Naive thymus-derived CD4-positive, alpha-beta T cell (primary cell): ENCODE measurements at regions of chr1 and their contacts with region 1.

Region 1: GRCh38 chr1:165871311-165872067 is 44.1 kb downstream of the UCK2 start:
- DNase-seq: peak in 8 of 9 donors; percentile 10 to 57 (median 52)
- ATAC-seq: peak; percentile 89
- H3K4me3 ChIP-seq: peak overlapping the region; percentile 26
- H3K4me3 Mint-ChIP-seq: peak overlapping the region; percentile 54 to 86 (median 64)
- H3K27ac ChIP-seq: no peak overlapping the region
- H3K27ac Mint-ChIP-seq: peak overlapping the region in 8 of 9 donors; percentile 11 to 83 (median 31)
- H3K4me1 ChIP-seq: peaks cover 18 to 28% of the 10 kb centered on the region in 2 donors
- H3K4me1 Mint-ChIP-seq: peaks cover 23 to 60% (median 54%) of the 10 kb centered on the region in 7 donors
- H3K27me3 ChIP-seq: no peaks in the 10 kb centered on the region
- H3K27me3 Mint-ChIP-seq: peaks cover 0 to 11% (median 0%) of the 10 kb centered on the region in 5 donors

Region 2: GRCh38 chr1:165696625-165697100 is 174.8 kb before region 1 on chr1:
- CTCF ChIA-PET with region 1: no interaction called
- POLR2A ChIA-PET with region 1: no interaction called
- intact Hi-C with region 1: no loop called
- DNase-seq: no peak
- ATAC-seq: no peak
- H3K4me3 ChIP-seq: peak overlapping the region; percentile 96
- H3K4me3 Mint-ChIP-seq: peak overlapping the region; percentile 68 to 100 (median 99)
- H3K27ac ChIP-seq: peak overlapping the region; percentile 9
- H3K27ac Mint-ChIP-seq: peak overlapping the region; percentile 1 to 99 (median 79)
- H3K4me1 ChIP-seq: peaks cover 14 to 18% of the 10 kb centered on the region in 2 donors
- H3K4me1 Mint-ChIP-seq: peaks cover 21 to 49% (median 43%) of the 10 kb centered on the region in 7 donors
- H3K27me3 ChIP-seq: no peaks in the 10 kb centered on the region
- H3K27me3 Mint-ChIP-seq: no peaks in the 10 kb centered on the region

Region 3: GRCh38 chr1:165738794-165739193 is 132.7 kb before region 1 on chr1:
- CTCF ChIA-PET with region 1: no interaction called
- POLR2A ChIA-PET with region 1: no interaction called
- intact Hi-C with region 1: loop called in 1 of 2 experiments (anchors 10 kb)
- DNase-seq: no peak
- ATAC-seq: no peak
- H3K4me3 ChIP-seq: no peak overlapping the region
- H3K4me3 Mint-ChIP-seq: no peak overlapping the region
- H3K27ac ChIP-seq: no peak overlapping the region
- H3K27ac Mint-ChIP-seq: peak overlapping the region in 1 of 9 donors; percentile 47
- H3K4me1 ChIP-seq: no peaks in the 10 kb centered on the region
- H3K4me1 Mint-ChIP-seq: peaks cover 2 to 25% (median 13%) of the 10 kb centered on the region in 7 donors
- H3K27me3 ChIP-seq: no peaks in the 10 kb centered on the region
- H3K27me3 Mint-ChIP-seq: no peaks in the 10 kb centered on the region

Region 4: DNA sequence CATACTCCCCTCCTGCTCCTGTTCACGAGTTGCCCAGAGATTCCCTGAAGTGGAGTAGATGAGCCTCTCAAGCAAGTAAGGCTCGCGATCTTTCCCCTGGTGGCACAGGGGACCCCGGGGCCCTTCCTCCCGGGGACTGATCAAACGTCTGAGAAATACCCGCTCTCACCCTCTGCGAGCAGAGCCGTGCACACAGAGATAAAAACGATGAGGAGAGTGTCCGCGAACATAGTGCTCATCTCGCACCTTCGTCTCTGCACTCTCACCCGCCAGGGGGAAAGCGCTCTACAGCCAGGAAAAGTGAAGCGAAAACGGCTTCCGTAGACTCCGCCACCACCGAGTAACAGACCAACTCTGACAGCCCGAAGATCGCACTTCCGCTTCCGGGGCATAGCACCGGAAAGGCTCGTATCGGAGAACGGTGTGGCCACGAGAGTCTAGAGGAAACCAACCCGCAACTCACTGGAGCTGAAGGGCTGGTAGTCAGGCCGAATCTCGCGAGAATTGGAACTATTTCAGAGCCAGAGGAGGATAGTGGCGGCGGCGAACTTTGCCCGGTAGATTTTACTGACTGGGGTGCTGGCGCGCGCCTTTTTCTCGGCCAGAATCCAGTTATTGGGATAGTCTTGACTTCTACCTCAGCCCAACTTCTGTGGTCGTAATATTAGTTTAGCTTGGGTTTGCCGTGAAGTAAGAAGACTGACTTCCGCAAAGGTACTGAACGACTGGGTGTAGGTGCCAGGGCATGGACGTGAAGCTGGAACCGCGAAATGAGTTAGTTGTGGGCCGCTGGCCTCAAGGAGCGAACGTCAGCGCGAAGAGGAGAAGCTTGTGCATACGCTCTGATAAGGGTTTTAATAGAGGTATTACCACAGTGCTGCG is 102.7 kb before region 1 on chr1 and contains the start of gene TMCO1:
- CTCF ChIA-PET with region 1: interaction called, 4 read pairs
- POLR2A ChIA-PET with region 1: interaction called, 6 read pairs
- intact Hi-C with region 1: loop called in 1 of 2 experiments (anchors 2 kb)
- DNase-seq: peak; percentile 76 to 97 (median 94)
- ATAC-seq: peak; percentile 98
- H3K4me3 ChIP-seq: peak within 1 kb of the TSS; percentile 94
- H3K4me3 Mint-ChIP-seq: peak within 1 kb of the TSS; percentile 90 to 100 (median 97)
- H3K27ac ChIP-seq: peak within 1 kb of the TSS; percentile 85
- H3K27ac Mint-ChIP-seq: peak within 1 kb of the TSS; percentile 91 to 100 (median 98)
- H3K4me1 ChIP-seq: peaks cover 19 to 32% of the 10 kb centered on the region in 2 donors
- H3K4me1 Mint-ChIP-seq: peaks cover 44 to 83% (median 68%) of the 10 kb centered on the region in 7 donors
- H3K27me3 ChIP-seq: no peaks in the 10 kb centered on the region
- H3K27me3 Mint-ChIP-seq: no peaks in the 10 kb centered on the region
- total RNA-seq, gene TMCO1: 30.4 to 97.1 (median 49.8) TPM

Region 5: DNA sequence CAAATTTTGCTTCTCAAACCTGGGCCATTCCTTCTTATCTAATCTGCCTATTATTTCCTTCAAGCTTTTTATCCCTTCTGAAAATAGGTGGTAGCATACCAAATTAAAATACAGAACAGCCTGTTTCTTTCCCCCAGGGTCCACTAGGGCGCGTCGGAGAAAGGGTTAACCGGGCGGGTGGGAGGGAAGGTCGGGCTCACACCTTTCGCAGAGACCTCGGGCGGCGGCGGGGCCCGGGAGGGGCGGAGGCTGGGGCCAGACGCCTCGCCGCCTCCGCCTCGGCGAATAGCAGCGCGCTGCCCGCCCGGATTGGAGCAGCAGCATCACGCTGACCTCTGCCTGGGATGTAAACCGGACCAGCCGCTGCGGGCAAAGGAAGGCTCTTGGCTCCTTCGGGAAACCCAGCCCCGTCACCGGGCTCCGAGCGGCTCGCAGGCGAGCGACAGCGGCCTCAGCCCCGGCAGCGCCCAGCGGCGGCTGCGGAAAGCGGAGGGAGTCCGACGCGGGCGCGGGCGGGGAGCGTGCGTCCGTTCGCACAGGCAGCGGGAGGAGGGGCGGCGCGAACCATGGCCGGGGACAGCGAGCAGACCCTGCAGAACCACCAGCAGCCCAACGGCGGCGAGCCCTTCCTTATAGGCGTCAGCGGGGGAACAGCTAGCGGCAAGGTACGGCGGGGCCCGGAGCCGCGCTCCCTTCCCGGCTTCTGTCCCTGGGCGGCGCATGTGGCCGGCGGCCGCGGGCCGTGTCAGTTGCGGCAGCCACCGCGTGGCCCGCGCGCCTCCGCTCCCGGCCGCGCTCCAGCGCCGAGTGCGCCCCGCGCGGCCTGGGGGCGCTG is 44.0 kb before region 1 on chr1 and contains the start of gene UCK2:
- CTCF ChIA-PET with region 1: interaction called, 4 read pairs
- POLR2A ChIA-PET with region 1: no interaction called
- intact Hi-C with region 1: loop called (anchors 1 to 2 kb)
- DNase-seq: peak in 7 of 9 donors; percentile 14 to 77 (median 27)
- ATAC-seq: peak; percentile 81
- H3K4me3 ChIP-seq: peak within 1 kb of the TSS; percentile 77
- H3K4me3 Mint-ChIP-seq: peak within 1 kb of the TSS; percentile 85 to 95 (median 92)
- H3K27ac ChIP-seq: peak within 1 kb of the TSS; percentile 42
- H3K27ac Mint-ChIP-seq: peak within 1 kb of the TSS in 7 of 9 donors; percentile 2 to 85 (median 60)
- H3K4me1 ChIP-seq: peaks cover 9 to 12% of the 10 kb centered on the region in 2 donors
- H3K4me1 Mint-ChIP-seq: peaks cover 0 to 27% (median 19%) of the 10 kb centered on the region in 7 donors
- H3K27me3 ChIP-seq: no peaks in the 10 kb centered on the region
- H3K27me3 Mint-ChIP-seq: peaks cover under 1 to 23% (median 9%) of the 10 kb centered on the region in 5 donors
- total RNA-seq, gene UCK2: 0.89 to 32.7 (median 1.2) TPM